Heart left ventricle (tissue), 16 donors: ENCODE measurements at regions of chr6 and their contacts with region 1.

Region 1: DNA sequence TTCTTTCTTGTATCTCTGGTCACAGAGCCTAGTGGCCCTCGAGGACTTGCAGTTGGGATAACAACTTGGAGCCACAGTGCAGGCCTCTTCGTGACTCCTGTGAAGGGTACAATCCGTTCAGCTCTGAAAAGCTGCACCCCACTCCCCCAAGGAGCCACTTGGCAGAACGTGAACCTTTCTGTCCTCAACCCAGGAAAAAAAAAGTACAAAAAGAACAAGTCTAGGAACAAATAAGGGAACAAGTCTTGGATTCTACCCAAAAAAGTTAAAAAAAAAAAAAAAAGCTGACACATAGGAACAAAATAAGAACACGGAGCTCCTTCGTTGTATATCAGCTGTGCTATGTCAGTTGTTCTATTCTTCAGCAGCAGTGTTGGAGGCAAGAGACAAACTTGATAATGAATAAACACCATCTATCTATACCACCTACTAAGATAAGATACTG is 77.9 kb upstream of the TULP1 start:
- DNase-seq: peak in 2 of 5 donors; percentile 52 to 59
- ATAC-seq: peak; percentile 66 to 86 (median 78)
- H3K4me3 ChIP-seq: no peak overlapping the region
- H3K27ac ChIP-seq: peak overlapping the region; percentile 6 to 92 (median 75)
- H3K4me1 ChIP-seq: peaks cover 21 to 94% (median 37%) of the 10 kb centered on the region in 12 donors
- H3K27me3 ChIP-seq: no peaks in the 10 kb centered on the region
- CTCF ChIP-seq: no peak
- POLR2A ChIP-seq: peak in 1 of 2 donors; percentile 39

Region 2: GRCh38 chr6:35634316-35634715 is 43.7 kb after region 1 on chr6:
- intact Hi-C with region 1: loop called in 2 of 10 experiments (anchors 5 to 10 kb)
- DNase-seq: peak in 4 of 5 donors; percentile 25 to 58 (median 34)
- ATAC-seq: peak; percentile 20 to 73 (median 68)
- H3K4me3 ChIP-seq: no peak overlapping the region
- H3K27ac ChIP-seq: peak overlapping the region in 5 of 12 donors; percentile 2 to 23 (median 18)
- H3K4me1 ChIP-seq: peaks cover 0 to 16% (median 7%) of the 10 kb centered on the region in 12 donors
- H3K27me3 ChIP-seq: no peaks in the 10 kb centered on the region
- CTCF ChIP-seq: no peak
- POLR2A ChIP-seq: no peak

Region 3: GRCh38 chr6:35876902-35877301 is 286.3 kb after region 1 on chr6:
- intact Hi-C with region 1: no loop called
- DNase-seq: no peak
- ATAC-seq: no peak
- H3K4me3 ChIP-seq: no peak overlapping the region
- H3K27ac ChIP-seq: no peak overlapping the region
- H3K4me1 ChIP-seq: peaks cover 0 to 5% (median 0%) of the 10 kb centered on the region in 12 donors
- H3K27me3 ChIP-seq: no peaks in the 10 kb centered on the region
- CTCF ChIP-seq: no peak
- POLR2A ChIP-seq: no peak